SK-N-SH (cell line): ENCODE measurements at regions of chr20 and their contacts with region 1.

Region 1: GRCh38 chr20:46174469-46175128 is 56.5 kb downstream of the CD40 start:
- DNase-seq: peak; percentile 95
- H3K4me3 ChIP-seq: no peak overlapping the region; a peak in 1 of 4 replicates
- H3K27ac ChIP-seq: no peak overlapping the region
- H3K4me1 ChIP-seq: peaks cover 0 to 21% of the 10 kb centered on the region in 2 experiments; a peak in 2 of 4 replicates
- H3K27me3 ChIP-seq: peaks cover 21% of the 10 kb centered on the region
- CTCF ChIP-seq: peak; percentile 44
- EP300 ChIP-seq: no peak
- RAD21 ChIP-seq: peak; percentile 72

Region 2: DNA sequence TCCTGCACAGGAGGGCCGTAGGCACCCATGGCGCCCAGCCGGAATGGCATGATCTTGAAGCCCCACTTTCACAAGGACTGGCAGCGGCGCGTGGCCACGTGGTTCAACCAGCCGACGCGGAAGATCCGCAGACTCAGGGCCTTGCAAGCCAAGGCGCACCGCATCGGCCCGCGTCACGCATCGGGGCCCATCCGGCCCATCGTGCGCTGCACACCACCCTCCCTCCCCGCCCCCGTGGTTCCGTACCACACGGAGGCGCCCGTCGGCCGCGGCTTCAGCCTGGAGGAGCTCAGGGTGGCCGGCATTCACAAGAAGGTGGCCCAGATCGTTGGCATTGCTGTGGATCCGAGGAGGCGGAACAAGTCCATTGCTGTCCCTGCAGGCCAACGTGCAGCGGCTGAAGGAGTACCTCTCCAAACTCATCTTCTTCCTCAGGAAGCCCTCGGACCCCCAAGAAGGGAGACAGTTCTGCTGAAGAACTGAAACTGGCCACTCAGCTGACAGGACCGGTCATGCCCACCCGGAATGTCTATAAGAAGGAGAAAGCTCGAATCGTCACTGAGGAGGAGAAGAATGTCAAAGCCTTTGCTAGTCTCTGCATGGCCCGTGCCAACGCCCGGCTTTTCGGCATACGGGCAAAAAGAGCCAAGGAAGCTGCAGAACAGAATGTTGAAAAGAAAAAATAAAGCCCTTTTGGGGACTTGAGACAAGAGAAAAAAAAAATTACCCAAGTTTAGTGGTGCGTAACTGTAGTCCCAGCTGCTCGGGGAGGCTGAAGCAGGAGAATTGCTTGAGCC is 74.9 kb before region 1 on chr20:
- CTCF ChIA-PET with region 1: no interaction called
- POLR2A ChIA-PET with region 1: no interaction called
- DNase-seq: no peak
- H3K4me3 ChIP-seq: no peak overlapping the region
- H3K27ac ChIP-seq: no peak overlapping the region
- H3K4me1 ChIP-seq: no peaks in the 10 kb centered on the region
- H3K27me3 ChIP-seq: no peaks in the 10 kb centered on the region; the same call in 1 of the 2 replicates
- CTCF ChIP-seq: no peak
- EP300 ChIP-seq: no peak
- RAD21 ChIP-seq: no peak

Region 3: DNA sequence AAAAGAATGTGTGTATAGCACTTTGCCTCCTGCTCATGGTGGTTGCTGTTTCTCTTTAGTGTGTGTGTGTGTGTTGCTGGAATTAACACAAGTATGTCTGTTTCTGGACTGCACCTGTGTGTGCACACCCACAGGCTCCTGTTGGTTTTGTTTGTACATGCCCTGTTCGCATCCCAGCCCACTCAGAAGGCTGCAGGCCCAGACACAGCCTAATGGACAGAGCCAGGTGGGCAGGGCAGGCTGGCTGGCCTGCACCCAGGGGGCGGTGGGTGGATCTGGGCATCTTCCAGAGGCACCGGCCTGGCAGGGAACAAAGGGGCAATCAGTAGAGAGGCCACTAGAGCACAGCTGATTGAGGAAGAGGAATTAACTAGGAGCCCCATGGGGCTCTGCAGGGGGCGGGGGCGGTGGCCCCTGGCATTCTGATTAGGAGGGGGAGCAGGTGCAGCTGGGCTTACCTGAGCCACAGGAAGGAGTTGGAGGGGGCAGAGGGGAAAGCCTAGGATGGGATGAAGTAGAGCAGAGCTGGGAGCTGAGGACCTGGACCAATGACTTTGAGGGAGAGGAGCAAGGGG is 34.6 kb before region 1 on chr20:
- CTCF ChIA-PET with region 1: interaction called, 347 read pairs
- POLR2A ChIA-PET with region 1: no interaction called
- DNase-seq: peak; percentile 68
- H3K4me3 ChIP-seq: no peak overlapping the region
- H3K27ac ChIP-seq: peak overlapping the region in 1 of 2 experiments; percentile 99; a peak in 2 of 4 replicates
- H3K4me1 ChIP-seq: peaks cover 0 to 72% of the 10 kb centered on the region in 2 experiments; a peak in 2 of 4 replicates
- H3K27me3 ChIP-seq: peaks cover 31% of the 10 kb centered on the region; the same call in 1 of the 2 replicates
- CTCF ChIP-seq: no peak
- EP300 ChIP-seq: no peak; a peak in 1 of 4 replicates
- RAD21 ChIP-seq: 0 out of 2 replicates have a peak, but pooled peaks have one; percentile 5

Region 4: GRCh38 chr20:46157625-46158024 is 17.0 kb before region 1 on chr20:
- CTCF ChIA-PET with region 1: interaction called, 81 read pairs
- POLR2A ChIA-PET with region 1: no interaction called
- DNase-seq: peak; percentile 64
- H3K4me3 ChIP-seq: no peak overlapping the region
- H3K27ac ChIP-seq: peak overlapping the region in 1 of 2 experiments; percentile 72; a peak in 2 of 4 replicates
- H3K4me1 ChIP-seq: peaks cover 0 to 41% of the 10 kb centered on the region in 2 experiments; a peak in 2 of 4 replicates
- H3K27me3 ChIP-seq: peaks cover 16% of the 10 kb centered on the region; the same call in 1 of the 2 replicates
- CTCF ChIP-seq: no peak
- EP300 ChIP-seq: no peak
- RAD21 ChIP-seq: no peak

Region 5: GRCh38 chr20:46186210-46186609 is 11.6 kb after region 1 on chr20:
- CTCF ChIA-PET with region 1: interaction called, 20 read pairs
- POLR2A ChIA-PET with region 1: no interaction called
- DNase-seq: no peak
- H3K4me3 ChIP-seq: no peak overlapping the region
- H3K27ac ChIP-seq: no peak overlapping the region
- H3K4me1 ChIP-seq: peaks cover 0 to 13% of the 10 kb centered on the region in 2 experiments; a peak in 1 of 4 replicates
- H3K27me3 ChIP-seq: 0 out of 2 replicates have a peak, but pooled peaks cover 4% of the 10 kb centered on the region
- CTCF ChIP-seq: no peak
- EP300 ChIP-seq: no peak
- RAD21 ChIP-seq: no peak

Region 6: GRCh38 chr20:46253391-46253790 is 78.8 kb after region 1 on chr20:
- CTCF ChIA-PET with region 1: interaction called, 16 read pairs
- POLR2A ChIA-PET with region 1: no interaction called
- DNase-seq: peak; percentile 83
- H3K4me3 ChIP-seq: no peak overlapping the region
- H3K27ac ChIP-seq: no peak overlapping the region
- H3K4me1 ChIP-seq: peaks cover 0 to 7% of the 10 kb centered on the region in 2 experiments; a peak in 1 of 4 replicates
- H3K27me3 ChIP-seq: no peaks in the 10 kb centered on the region
- CTCF ChIP-seq: peak; percentile 29; the same call in 1 of the 2 replicates
- EP300 ChIP-seq: no peak
- RAD21 ChIP-seq: peak; percentile 74